ENCODE measurements at regions of chr11 and their contacts with region 1.

Region 1: GRCh38 chr11:94767761-94768601 is at the start of gene AMOTL1:
- DNase-seq: peak; percentile 32
- H3K4me3 Mint-ChIP-seq: peak within 1 kb of the TSS; percentile 78
- H3K27ac Mint-ChIP-seq: peak within 1 kb of the TSS; percentile 64
- H3K4me1 Mint-ChIP-seq: peaks cover 13% of the 10 kb centered on the region
- H3K27me3 Mint-ChIP-seq: peaks cover 38% of the 10 kb centered on the region
- total RNA-seq, gene AMOTL1: 4.4 and 4.9 TPM in 2 replicates

Region 2: GRCh38 chr11:94519478-94520084 is 248.4 kb before region 1 on chr11:
- intact Hi-C with region 1: loop called (anchors 10 kb)
- DNase-seq: no peak
- H3K4me3 Mint-ChIP-seq: no peak overlapping the region
- H3K27ac Mint-ChIP-seq: no peak overlapping the region
- H3K4me1 Mint-ChIP-seq: no peaks in the 10 kb centered on the region
- H3K27me3 Mint-ChIP-seq: peaks cover 27% of the 10 kb centered on the region

Region 3: GRCh38 chr11:94623120-94623735 is 144.8 kb before region 1 on chr11:
- intact Hi-C with region 1: loop called (anchors 10 kb)
- DNase-seq: peak; percentile 27
- H3K4me3 Mint-ChIP-seq: no peak overlapping the region
- H3K27ac Mint-ChIP-seq: no peak overlapping the region
- H3K4me1 Mint-ChIP-seq: no peaks in the 10 kb centered on the region
- H3K27me3 Mint-ChIP-seq: peaks cover 7% of the 10 kb centered on the region

Region 4: GRCh38 chr11:94757037-94757735 is 10.8 kb before region 1 on chr11:
- intact Hi-C with region 1: no loop called
- DNase-seq: no peak
- H3K4me3 Mint-ChIP-seq: no peak overlapping the region
- H3K27ac Mint-ChIP-seq: no peak overlapping the region
- H3K4me1 Mint-ChIP-seq: no peaks in the 10 kb centered on the region
- H3K27me3 Mint-ChIP-seq: peaks cover 17% of the 10 kb centered on the region